Common myeloid progenitor, CD34-positive (primary cell): ENCODE measurements at regions of chr1 and their contacts with region 1.

Region 1: DNA sequence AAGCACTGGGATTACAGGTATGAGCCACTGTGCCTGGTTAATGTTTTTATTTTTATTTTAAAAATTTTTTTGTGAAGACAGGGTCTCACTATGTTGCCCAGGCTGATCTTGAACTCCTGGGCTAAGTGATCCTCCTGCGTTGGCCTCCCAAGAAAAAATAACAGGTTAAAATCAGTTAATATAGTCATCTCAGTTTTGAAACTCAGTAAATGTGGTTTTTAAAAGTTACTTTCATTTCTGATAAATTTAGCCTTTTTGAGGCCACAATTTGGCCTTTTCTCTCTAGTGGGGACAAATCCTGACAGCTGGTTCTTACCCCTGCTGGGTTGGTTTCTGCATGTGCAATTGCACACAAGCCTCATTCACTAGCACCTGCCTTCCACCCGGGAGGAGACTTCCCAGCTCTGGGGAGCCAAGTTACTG is 13.3 kb downstream of the PMF1 start:
- DNase-seq: no peak
- H3K4me3 ChIP-seq: no peak overlapping the region
- H3K27ac ChIP-seq: no peak overlapping the region
- H3K4me1 ChIP-seq: peaks cover 0 to 22% (median 12%) of the 10 kb centered on the region in 4 experiments
- H3K27me3 ChIP-seq: no peaks in the 10 kb centered on the region

Region 2: GRCh38 chr1:156090822-156091188 is 135.3 kb before region 1 on chr1:
- CTCF ChIA-PET with region 1: interaction called, 14 read pairs
- POLR2A ChIA-PET with region 1: no interaction called
- DNase-seq: peak; percentile 79 to 88 (median 81)
- H3K4me3 ChIP-seq: no peak overlapping the region
- H3K27ac ChIP-seq: no peak overlapping the region
- H3K4me1 ChIP-seq: peaks cover 0 to 17% (median 11%) of the 10 kb centered on the region in 4 experiments
- H3K27me3 ChIP-seq: peaks cover 0 to 5% (median 0%) of the 10 kb centered on the region in 5 experiments

Region 3: GRCh38 chr1:156146020-156146768 is 79.9 kb before region 1 on chr1:
- CTCF ChIA-PET with region 1: interaction called, 399 read pairs
- POLR2A ChIA-PET with region 1: interaction called, 12 read pairs
- DNase-seq: peak; percentile 86 to 93 (median 92)
- H3K4me3 ChIP-seq: peak overlapping the region in 5 of 7 experiments; percentile 12 to 57 (median 32)
- H3K27ac ChIP-seq: peak overlapping the region in 1 of 2 experiments; percentile 66
- H3K4me1 ChIP-seq: peaks cover 0 to 48% (median 38%) of the 10 kb centered on the region in 4 experiments
- H3K27me3 ChIP-seq: no peaks in the 10 kb centered on the region

Region 4: GRCh38 chr1:156172696-156173470 is 53.2 kb before region 1 on chr1:
- CTCF ChIA-PET with region 1: interaction called, 13 read pairs
- POLR2A ChIA-PET with region 1: no interaction called
- DNase-seq: no peak
- H3K4me3 ChIP-seq: no peak overlapping the region
- H3K27ac ChIP-seq: no peak overlapping the region
- H3K4me1 ChIP-seq: peaks cover 0 to 1% (median 0%) of the 10 kb centered on the region in 4 experiments
- H3K27me3 ChIP-seq: no peaks in the 10 kb centered on the region

Region 5: GRCh38 chr1:156212833-156213643 is 13.1 kb before region 1 on chr1 and contains the start of gene PMF1:
- CTCF ChIA-PET with region 1: interaction called, 13 read pairs
- POLR2A ChIA-PET with region 1: interaction called, 4 read pairs
- DNase-seq: peak; percentile 95 to 97 (median 96)
- H3K4me3 ChIP-seq: peak within 1 kb of the TSS; percentile 64 to 98 (median 92)
- H3K27ac ChIP-seq: peak within 1 kb of the TSS; percentile 98
- H3K4me1 ChIP-seq: peaks cover 8 to 39% (median 28%) of the 10 kb centered on the region in 4 experiments
- H3K27me3 ChIP-seq: no peaks in the 10 kb centered on the region

Region 6: GRCh38 chr1:156319664-156320063 is 93.5 kb after region 1 on chr1:
- CTCF ChIA-PET with region 1: interaction called, 11 read pairs
- POLR2A ChIA-PET with region 1: interaction called, 3 read pairs
- DNase-seq: peak; percentile 51 to 71 (median 58)
- H3K4me3 ChIP-seq: no peak overlapping the region
- H3K27ac ChIP-seq: no peak overlapping the region
- H3K4me1 ChIP-seq: no peaks in the 10 kb centered on the region
- H3K27me3 ChIP-seq: no peaks in the 10 kb centered on the region